ENCODE measurements at regions of chr7 and their contacts with region 1.

Region 1: DNA sequence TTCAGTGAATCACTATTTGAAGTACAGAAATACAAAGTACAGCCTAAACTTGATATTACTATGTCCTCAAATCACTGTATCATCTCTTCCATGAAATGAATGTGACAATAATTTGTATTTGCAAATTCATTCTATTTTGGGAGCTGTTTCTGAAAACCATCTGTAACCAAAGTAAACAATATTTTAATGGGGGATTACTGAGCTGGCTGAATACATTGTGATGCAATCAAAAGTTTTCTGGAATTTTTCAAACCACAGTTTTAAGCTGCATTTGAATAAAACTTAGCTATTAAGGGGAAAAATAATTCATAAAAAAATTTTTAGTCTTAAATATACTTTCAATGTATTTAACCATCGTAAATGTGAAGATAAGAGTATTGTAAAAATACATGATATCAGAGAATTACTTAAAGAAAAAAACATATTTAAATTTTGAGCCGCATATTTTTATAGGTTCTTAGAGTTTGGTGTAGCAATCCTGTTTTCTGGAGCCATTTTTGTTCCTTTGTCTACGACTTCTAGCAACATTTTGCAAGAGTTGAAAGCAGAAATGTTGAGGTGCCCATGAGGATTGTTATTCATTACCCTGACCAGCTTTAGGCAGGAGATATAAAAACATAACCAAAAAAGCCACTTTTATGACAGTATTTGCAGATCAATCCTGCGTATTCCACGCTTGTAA is 45.9 kb upstream of the AGMO start:
- DNase-seq: no peak
- H3K4me3 Mint-ChIP-seq: no peak overlapping the region
- H3K27ac Mint-ChIP-seq: no peak overlapping the region
- H3K4me1 Mint-ChIP-seq: no peaks in the 10 kb centered on the region
- H3K27me3 Mint-ChIP-seq: no peaks in the 10 kb centered on the region
- CTCF ChIP-seq: no peak

Region 2: DNA sequence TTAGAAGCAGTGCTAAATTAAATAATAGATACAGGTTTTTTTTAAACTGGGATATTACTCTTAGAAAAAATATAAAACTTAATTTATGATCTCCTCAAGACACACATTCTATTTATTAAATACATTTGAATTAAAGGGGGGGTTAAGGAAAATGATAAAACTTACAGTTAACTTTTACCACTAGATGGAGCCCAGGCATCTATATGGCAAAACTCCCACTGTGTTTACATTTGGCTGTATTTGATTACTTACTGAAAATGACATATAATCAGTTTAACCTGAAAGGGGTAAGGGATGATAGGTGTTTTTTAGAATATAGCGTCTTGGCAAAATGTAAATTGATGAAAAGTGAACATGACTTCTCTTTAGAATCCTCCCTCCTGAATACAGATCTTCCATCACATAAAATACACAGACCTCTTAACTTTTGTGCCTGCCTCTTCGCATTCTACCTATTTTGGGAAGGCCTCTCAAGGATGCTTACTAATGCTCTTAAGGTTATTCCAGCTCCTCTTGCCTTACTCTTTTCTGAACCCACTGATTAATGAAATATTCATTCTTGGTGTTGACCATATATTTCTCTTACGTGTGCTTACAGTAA is 281.5 kb before region 1 on chr7:
- CTCF ChIA-PET with region 1: no interaction called
- intact Hi-C with region 1: loop called (anchors 5 kb)
- DNase-seq: no peak
- H3K4me3 Mint-ChIP-seq: no peak overlapping the region
- H3K27ac Mint-ChIP-seq: no peak overlapping the region
- H3K4me1 Mint-ChIP-seq: no peaks in the 10 kb centered on the region
- H3K27me3 Mint-ChIP-seq: no peaks in the 10 kb centered on the region
- CTCF ChIP-seq: peak; percentile 58

Region 3: DNA sequence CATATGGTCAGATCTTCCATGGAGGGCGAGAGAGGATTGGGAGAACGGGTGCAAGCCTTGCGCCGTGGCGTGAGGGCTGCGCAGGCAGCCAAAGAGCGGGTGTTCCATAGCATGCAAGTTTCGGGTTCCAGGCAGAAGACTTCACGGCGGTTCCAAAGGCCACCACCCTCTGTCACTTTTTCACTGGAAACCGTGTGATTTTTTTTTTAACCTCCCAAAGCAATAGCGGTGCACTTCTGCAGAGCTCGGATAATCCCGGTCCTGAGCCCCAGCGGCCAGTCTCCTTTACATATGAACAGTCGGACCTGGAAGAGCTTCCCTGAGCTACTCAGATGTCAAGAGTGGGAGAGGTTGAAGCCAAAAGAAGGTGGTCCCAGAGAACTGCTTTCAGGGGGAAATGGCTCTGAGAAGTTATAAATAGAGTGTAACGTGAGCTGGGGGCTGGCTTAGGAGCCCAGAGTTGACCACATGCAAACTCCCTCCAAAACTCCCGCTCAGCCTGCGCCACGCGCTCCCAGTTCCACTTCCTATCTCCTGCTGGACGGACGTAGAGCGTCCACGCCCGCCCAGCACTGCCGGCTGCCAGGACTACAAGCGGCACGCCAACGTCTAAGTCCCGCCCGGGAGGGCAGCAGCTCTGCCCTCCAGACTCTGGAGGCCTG is 78.8 kb after region 1 on chr7 and contains the start of gene MEOX2:
- CTCF ChIA-PET with region 1: no interaction called
- intact Hi-C with region 1: no loop called
- DNase-seq: peak; percentile 81
- H3K4me3 Mint-ChIP-seq: peak within 1 kb of the TSS; percentile 95
- H3K27ac Mint-ChIP-seq: peak within 1 kb of the TSS; percentile 63
- H3K4me1 Mint-ChIP-seq: peaks cover 47% of the 10 kb centered on the region
- H3K27me3 Mint-ChIP-seq: peaks cover 48% of the 10 kb centered on the region
- CTCF ChIP-seq: no peak
- total RNA-seq, gene MEOX2: 8.7 and 12.6 TPM in 2 replicates